Activated B cell treated with CpG ODN at 0.5 μM for 24 hours (primary cell): ENCODE measurements at regions of chr11 and their contacts with region 1.

Region 1: GRCh38 chr11:116980136-116980793 is 118.0 kb downstream of the SIK3 start:
- DNase-seq: no peak
- ATAC-seq: peak; percentile 96
- H3K4me3 Mint-ChIP-seq: peak overlapping the region; percentile 81
- H3K27ac Mint-ChIP-seq: peak overlapping the region; percentile 94
- H3K4me1 Mint-ChIP-seq: peaks cover 77% of the 10 kb centered on the region
- H3K27me3 Mint-ChIP-seq: no peaks in the 10 kb centered on the region
- CTCF ChIP-seq: no peak

Region 2: GRCh38 chr11:116993599-116993998 is 13.3 kb after region 1 on chr11:
- CTCF ChIA-PET with region 1: interaction called, 3 read pairs
- POLR2A ChIA-PET with region 1: no interaction called
- intact Hi-C with region 1: loop called (anchors 1 kb)
- DNase-seq: no peak
- ATAC-seq: peak; percentile 61
- H3K4me3 Mint-ChIP-seq: peak overlapping the region; percentile 59
- H3K27ac Mint-ChIP-seq: peak overlapping the region; percentile 78
- H3K4me1 Mint-ChIP-seq: peaks cover 68% of the 10 kb centered on the region
- H3K27me3 Mint-ChIP-seq: no peaks in the 10 kb centered on the region
- CTCF ChIP-seq: no peak

Region 3: GRCh38 chr11:117020287-117020686 is 40.0 kb after region 1 on chr11:
- CTCF ChIA-PET with region 1: no interaction called
- POLR2A ChIA-PET with region 1: interaction called, 4 read pairs
- intact Hi-C with region 1: loop called (anchors 1 kb)
- DNase-seq: no peak
- ATAC-seq: peak; percentile 86
- H3K4me3 Mint-ChIP-seq: peak overlapping the region; percentile 45
- H3K27ac Mint-ChIP-seq: peak overlapping the region; percentile 62
- H3K4me1 Mint-ChIP-seq: peaks cover 79% of the 10 kb centered on the region
- H3K27me3 Mint-ChIP-seq: no peaks in the 10 kb centered on the region
- CTCF ChIP-seq: no peak

Region 4: GRCh38 chr11:117064275-117064674 is 84.0 kb after region 1 on chr11:
- CTCF ChIA-PET with region 1: no interaction called
- POLR2A ChIA-PET with region 1: interaction called, 5 read pairs
- intact Hi-C with region 1: loop called (anchors 2 kb)
- DNase-seq: no peak
- ATAC-seq: no peak
- H3K4me3 Mint-ChIP-seq: peak overlapping the region; percentile 37
- H3K27ac Mint-ChIP-seq: peak overlapping the region; percentile 71
- H3K4me1 Mint-ChIP-seq: peaks cover 78% of the 10 kb centered on the region
- H3K27me3 Mint-ChIP-seq: no peaks in the 10 kb centered on the region
- CTCF ChIP-seq: no peak